PC-3 (cell line): ENCODE measurements at regions of chr5 and their contacts with region 1.

Region 1: DNA sequence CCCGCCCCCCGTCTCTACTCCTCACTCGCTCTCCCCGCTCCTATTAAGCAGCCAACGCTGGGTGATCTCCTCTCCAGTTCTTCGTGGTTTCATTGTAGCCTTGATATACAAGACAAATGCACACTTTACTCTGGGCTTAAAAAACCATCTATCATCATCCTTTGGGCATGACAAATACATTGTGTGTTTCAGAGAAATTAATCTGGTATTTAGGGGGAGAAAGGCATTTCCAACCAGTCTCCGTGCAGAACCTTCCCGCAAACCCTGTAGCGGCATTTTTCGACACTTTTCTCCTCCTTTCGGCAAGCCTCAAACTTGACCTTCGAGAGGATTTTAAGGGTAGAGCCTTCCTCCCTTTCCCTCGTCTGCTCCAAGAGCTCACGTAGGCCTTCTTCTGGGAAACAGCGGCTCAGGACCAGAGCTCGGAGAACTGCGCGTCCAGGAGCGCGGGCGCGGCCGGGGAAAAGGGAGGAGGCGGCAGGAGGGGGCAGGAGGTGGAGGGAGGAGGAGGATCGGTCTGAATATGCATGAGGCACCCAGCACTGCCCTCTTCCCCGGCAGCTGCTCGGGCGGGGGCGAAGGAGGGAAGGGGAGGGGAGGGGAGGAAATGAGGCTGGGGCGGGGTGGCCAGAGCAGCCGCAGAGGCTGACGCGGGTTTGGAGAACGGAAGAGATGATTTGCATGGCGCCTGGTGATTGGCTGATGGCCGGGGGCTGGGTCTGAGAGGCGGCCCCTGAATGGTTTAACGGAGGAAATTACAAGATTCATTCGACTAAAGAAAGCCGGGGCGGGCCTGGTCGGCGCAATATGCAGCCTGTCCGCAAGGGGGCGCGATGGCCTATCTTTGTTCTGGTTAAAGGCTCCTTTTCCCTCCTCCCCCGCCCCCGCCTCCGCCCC is 127.5 kb downstream of the TMEM161B start:
- DNase-seq: peak; percentile 97
- ATAC-seq: peak; percentile 92
- H3K4me3 ChIP-seq: peak overlapping the region; percentile 82
- H3K27ac ChIP-seq: no peak overlapping the region
- H3K4me1 ChIP-seq: peaks cover 13% of the 10 kb centered on the region; the same call in 1 of the 2 replicates
- H3K27me3 ChIP-seq: no peaks in the 10 kb centered on the region
- CTCF ChIP-seq: peak; percentile 49

Region 2: GRCh38 chr5:87400305-87400899 is 740.7 kb before region 1 on chr5:
- CTCF ChIA-PET with region 1: interaction called, 10 read pairs
- POLR2A ChIA-PET with region 1: no interaction called
- intact Hi-C with region 1: no loop called
- DNase-seq: peak; percentile 78
- ATAC-seq: peak; percentile 85
- H3K4me3 ChIP-seq: no peak overlapping the region
- H3K27ac ChIP-seq: no peak overlapping the region
- H3K4me1 ChIP-seq: peaks cover 7% of the 10 kb centered on the region; the same call in 1 of the 2 replicates
- H3K27me3 ChIP-seq: no peaks in the 10 kb centered on the region
- CTCF ChIP-seq: peak; percentile 94

Region 3: GRCh38 chr5:87627363-87627762 is 513.7 kb before region 1 on chr5:
- CTCF ChIA-PET with region 1: interaction called, 11 read pairs
- POLR2A ChIA-PET with region 1: no interaction called
- intact Hi-C with region 1: no loop called
- DNase-seq: no peak
- ATAC-seq: no peak
- H3K4me3 ChIP-seq: no peak overlapping the region
- H3K27ac ChIP-seq: no peak overlapping the region
- H3K4me1 ChIP-seq: no peaks in the 10 kb centered on the region
- H3K27me3 ChIP-seq: peaks cover 25% of the 10 kb centered on the region
- CTCF ChIP-seq: no peak

Region 4: DNA sequence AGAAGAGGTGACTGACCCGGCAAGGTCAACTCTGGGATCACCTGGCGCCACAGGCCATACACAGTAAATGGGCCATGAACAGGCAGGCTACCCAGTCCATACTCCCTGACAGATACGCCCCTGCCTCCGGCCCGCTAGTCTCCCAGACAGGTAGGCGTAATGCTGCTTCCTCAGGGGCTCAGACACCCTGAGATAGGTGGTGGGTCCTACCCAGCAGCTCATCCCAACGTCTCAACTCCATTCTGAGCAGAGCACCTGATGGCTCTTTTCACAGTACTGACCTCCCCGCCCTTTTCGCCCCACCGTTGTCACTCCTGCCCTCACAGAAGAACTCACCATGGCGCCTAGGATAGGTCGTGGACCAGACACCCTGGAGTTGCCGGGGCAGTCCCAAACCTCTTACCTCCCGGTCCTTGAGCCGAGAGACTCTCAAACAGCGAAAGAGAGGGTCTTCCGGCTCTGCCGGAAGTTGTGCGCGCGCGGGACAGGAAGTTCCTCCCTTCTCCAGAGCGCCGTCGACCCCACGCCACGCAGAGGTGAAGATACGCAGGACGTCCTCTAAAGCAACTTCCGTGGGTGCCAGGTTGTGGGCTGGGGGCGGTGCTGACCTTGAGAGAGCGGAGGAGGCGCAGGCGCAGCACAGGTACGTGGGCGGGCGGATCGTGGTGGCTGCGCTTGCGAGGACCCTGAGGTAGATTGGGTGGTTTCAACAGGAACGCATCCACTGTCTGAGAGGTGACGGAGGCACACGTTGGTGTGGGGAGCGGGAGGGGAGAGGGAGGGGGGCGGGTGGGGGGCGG is 127.5 kb after region 1 on chr5 and contains the start of gene TMEM161B:
- CTCF ChIA-PET with region 1: no interaction called
- POLR2A ChIA-PET with region 1: no interaction called
- intact Hi-C with region 1: loop called (anchors 1 kb)
- DNase-seq: peak; percentile 93
- ATAC-seq: peak; percentile 98
- H3K4me3 ChIP-seq: peak within 1 kb of the TSS; percentile 96
- H3K27ac ChIP-seq: peak within 1 kb of the TSS; percentile 28; the same call in 1 of the 2 replicates
- H3K4me1 ChIP-seq: peaks cover 33% of the 10 kb centered on the region
- H3K27me3 ChIP-seq: no peaks in the 10 kb centered on the region
- CTCF ChIP-seq: no peak
- total RNA-seq, gene TMEM161B: 11.5 and 12.2 TPM in 2 replicates

Region 5: GRCh38 chr5:88515876-88516819 is 375.0 kb after region 1 on chr5:
- CTCF ChIA-PET with region 1: no interaction called
- POLR2A ChIA-PET with region 1: no interaction called
- intact Hi-C with region 1: loop called (anchors 2 kb)
- DNase-seq: peak; percentile 86
- ATAC-seq: peak; percentile 96
- H3K4me3 ChIP-seq: no peak overlapping the region
- H3K27ac ChIP-seq: peak overlapping the region; percentile 47
- H3K4me1 ChIP-seq: peaks cover 18% of the 10 kb centered on the region
- H3K27me3 ChIP-seq: no peaks in the 10 kb centered on the region
- CTCF ChIP-seq: no peak

Region 6: GRCh38 chr5:88680253-88681132 is 539.4 kb after region 1 on chr5:
- CTCF ChIA-PET with region 1: interaction called, 13 read pairs
- POLR2A ChIA-PET with region 1: no interaction called
- intact Hi-C with region 1: loop called (anchors 1 kb)
- DNase-seq: peak; percentile 80
- ATAC-seq: peak; percentile 96
- H3K4me3 ChIP-seq: peak overlapping the region; percentile 85
- H3K27ac ChIP-seq: no peak overlapping the region
- H3K4me1 ChIP-seq: peaks cover 6% of the 10 kb centered on the region; the same call in 1 of the 2 replicates
- H3K27me3 ChIP-seq: no peaks in the 10 kb centered on the region
- CTCF ChIP-seq: peak; percentile 89